ENCODE measurements at regions of chr17 and their contacts with region 1.

Region 1: DNA sequence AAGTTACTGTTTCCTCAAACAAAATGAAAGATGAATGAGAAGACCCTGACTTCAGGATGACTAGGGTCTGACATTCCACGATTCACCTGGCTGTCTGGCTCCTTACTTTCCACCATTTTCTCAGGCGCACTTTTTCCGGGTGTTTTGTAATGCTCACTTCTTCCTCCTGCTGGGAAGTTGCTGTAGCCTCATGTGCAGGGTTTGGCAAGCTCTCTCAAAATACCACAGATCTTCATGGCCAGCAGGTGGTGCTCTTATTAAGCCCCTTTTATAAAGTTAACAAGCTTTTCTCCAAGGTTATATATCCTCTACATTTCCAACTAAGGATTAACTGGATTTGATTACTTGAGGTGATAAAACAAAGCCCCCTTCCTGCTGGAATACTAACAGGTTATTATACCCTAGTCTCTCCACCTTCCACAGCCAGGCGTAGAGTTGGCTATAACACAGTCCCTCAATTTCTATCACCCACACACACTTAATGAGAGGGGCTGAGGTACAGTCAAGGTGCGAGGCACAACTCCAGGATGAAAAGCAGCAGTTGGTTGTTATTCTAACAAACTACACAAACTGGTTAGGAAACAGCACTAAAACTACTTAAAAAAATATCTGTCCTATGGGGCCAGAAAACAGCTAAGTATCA is 45.4 kb downstream of the STH start:
- H3K4me3 ChIP-seq: no peak overlapping the region
- H3K27ac ChIP-seq: no peak overlapping the region
- H3K4me1 ChIP-seq: peaks cover 7% of the 10 kb centered on the region; the same call in 1 of the 2 replicates
- CTCF ChIP-seq: peak; percentile 84

Region 2: DNA sequence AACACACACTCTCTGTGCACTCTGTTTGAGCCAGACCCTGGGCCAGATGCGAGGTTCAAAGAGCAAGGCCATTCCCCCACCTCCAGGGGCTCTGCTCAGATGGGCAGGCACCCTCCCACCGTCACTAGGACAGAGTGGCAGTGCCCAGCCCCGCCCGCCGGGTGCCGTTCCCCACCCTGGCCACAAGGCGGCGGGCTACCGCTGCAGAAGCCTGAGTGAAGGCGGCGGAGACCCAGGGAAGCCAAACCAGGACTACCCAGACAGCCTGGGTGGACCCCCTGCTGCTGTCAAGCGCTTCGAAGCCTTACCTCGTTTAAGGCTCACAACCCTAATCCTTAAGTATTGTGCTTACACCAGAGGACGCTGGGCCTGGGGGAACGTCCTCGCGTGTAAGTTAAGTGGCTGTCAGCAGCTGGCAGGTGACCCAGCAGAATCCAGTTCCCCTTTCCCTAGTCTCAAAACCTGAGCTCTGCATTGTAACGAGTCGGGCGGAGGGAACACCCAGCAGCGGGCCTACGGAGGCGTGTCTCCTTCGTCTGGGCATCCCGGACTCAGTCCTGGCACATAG is 616.3 kb before region 1 on chr17:
- CTCF ChIA-PET with region 1: no interaction called
- POLR2A ChIA-PET with region 1: no interaction called
- H3K4me3 ChIP-seq: no peak overlapping the region
- H3K27ac ChIP-seq: no peak overlapping the region
- H3K4me1 ChIP-seq: peaks cover 15% of the 10 kb centered on the region
- CTCF ChIP-seq: peak; percentile 91

Region 3: GRCh38 chr17:46002311-46002972 is 42.0 kb before region 1 on chr17:
- CTCF ChIA-PET with region 1: interaction called, 51 read pairs
- POLR2A ChIA-PET with region 1: interaction called, 3 read pairs
- H3K4me3 ChIP-seq: no peak overlapping the region
- H3K27ac ChIP-seq: no peak overlapping the region
- H3K4me1 ChIP-seq: peaks cover 4% of the 10 kb centered on the region; the same call in 1 of the 2 replicates
- CTCF ChIP-seq: peak; percentile 83

Region 4: GRCh38 chr17:46026166-46027047 is 18.0 kb before region 1 on chr17:
- CTCF ChIA-PET with region 1: interaction called, 18 read pairs
- POLR2A ChIA-PET with region 1: no interaction called
- H3K4me3 ChIP-seq: no peak overlapping the region
- H3K27ac ChIP-seq: no peak overlapping the region
- H3K4me1 ChIP-seq: no peaks in the 10 kb centered on the region
- CTCF ChIP-seq: no peak

Region 5: GRCh38 chr17:46056800-46057304 is 12.4 kb after region 1 on chr17:
- CTCF ChIA-PET with region 1: interaction called, 64 read pairs
- POLR2A ChIA-PET with region 1: interaction called, 4 read pairs
- H3K4me3 ChIP-seq: no peak overlapping the region
- H3K27ac ChIP-seq: no peak overlapping the region
- H3K4me1 ChIP-seq: peaks cover 12% of the 10 kb centered on the region
- CTCF ChIP-seq: no peak

Region 6: GRCh38 chr17:46063240-46063639 is 18.8 kb after region 1 on chr17:
- CTCF ChIA-PET with region 1: interaction called, 64 read pairs
- POLR2A ChIA-PET with region 1: no interaction called
- H3K4me3 ChIP-seq: no peak overlapping the region
- H3K27ac ChIP-seq: no peak overlapping the region
- H3K4me1 ChIP-seq: 0 out of 2 replicates have a peak, but pooled peaks cover 3% of the 10 kb centered on the region
- CTCF ChIP-seq: no peak

Region 7: GRCh38 chr17:46212634-46213435 is 168.4 kb after region 1 on chr17:
- CTCF ChIA-PET with region 1: interaction called, 42 read pairs
- POLR2A ChIA-PET with region 1: no interaction called
- H3K4me3 ChIP-seq: no peak overlapping the region
- H3K27ac ChIP-seq: no peak overlapping the region
- H3K4me1 ChIP-seq: no peaks in the 10 kb centered on the region
- CTCF ChIP-seq: peak; percentile 79